HEK293 (cell line): ENCODE measurements at regions of chr5 and their contacts with region 1.

Region 1: DNA sequence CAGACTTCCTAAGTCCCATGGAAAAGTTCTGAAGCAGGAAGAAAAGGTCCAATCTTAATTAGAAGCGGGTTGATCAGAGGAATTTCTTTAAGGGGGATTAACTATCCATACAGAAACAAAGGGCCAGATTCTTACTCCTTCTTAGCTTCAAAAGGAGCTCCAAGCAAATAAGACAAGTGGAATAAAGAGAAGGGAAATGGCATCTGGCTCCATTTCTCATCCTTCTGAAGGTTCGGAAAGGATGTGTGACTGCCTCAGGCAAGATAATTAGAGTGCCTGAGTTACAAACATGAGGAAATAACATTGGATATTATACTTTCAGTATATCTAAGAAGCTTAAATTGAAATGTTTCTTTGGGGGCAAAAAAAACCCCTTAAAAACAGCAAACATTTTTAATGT is 88.1 kb upstream of the ADAMTS19 start:
- H3K4me3 ChIP-seq: no peak overlapping the region
- H3K27ac ChIP-seq: no peak overlapping the region
- H3K4me1 ChIP-seq: no peaks in the 10 kb centered on the region
- CTCF ChIP-seq: no peak

Region 2: DNA sequence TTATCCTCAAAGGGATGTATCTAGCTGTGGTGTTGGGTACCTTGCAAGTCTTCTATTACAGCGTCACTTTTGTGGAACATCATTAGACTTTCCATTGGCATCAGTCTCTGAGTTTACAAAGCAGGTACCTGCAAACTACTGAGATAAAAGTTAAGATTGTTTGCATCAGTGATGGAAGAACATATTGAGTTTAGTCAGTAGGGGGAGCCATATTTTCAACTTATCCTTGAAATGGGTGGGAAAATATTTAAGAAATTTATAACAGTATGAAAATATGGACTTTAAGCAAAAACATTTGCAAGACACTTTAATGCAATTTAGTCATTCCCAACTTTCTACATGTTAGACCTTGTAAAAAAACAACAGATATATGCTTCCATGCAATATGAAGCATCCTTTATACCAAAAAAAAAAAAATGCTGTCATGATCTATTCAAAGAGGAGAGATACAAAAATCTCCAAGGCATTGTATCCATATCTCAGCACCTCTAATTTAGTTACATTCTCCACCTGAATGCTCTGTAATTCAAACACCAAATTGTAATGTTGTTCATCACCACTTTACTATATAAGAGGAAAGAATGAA is 10.5 kb before region 1 on chr5:
- CTCF ChIA-PET with region 1: interaction called, 11 read pairs
- POLR2A ChIA-PET with region 1: no interaction called
- H3K4me3 ChIP-seq: no peak overlapping the region
- H3K27ac ChIP-seq: no peak overlapping the region
- H3K4me1 ChIP-seq: no peaks in the 10 kb centered on the region
- CTCF ChIP-seq: no peak